Sciatic nerve (tissue), 2 donors: ENCODE measurements at regions of chr2 and their contacts with region 1.

Region 1: DNA sequence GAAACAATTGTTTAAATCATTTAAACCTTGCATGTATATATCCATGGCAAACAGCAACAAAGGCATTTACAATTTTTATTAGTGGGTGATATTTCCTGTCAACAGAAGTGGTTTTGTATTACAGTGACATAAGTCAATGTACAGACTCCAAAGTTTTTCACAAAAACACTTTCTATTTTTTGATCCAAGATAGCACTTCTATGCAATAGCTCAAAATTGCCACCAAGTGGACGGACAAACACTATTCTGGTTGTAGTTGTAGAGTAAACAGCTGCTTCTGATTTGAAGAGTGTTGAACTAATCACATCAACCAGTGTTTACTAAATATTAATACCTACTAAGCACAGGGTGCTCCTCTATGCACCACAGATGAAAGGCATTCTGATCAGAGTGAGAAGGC is 421.4 kb downstream of the NCKAP5 start:
- DNase-seq: no peak
- ATAC-seq: no peak

Region 2: GRCh38 chr2:132438691-132439090 is 708.2 kb before region 1 on chr2:
- intact Hi-C with region 1: no loop called
- DNase-seq: no peak
- ATAC-seq: no peak

Region 3: GRCh38 chr2:132669854-132670495 is 476.9 kb before region 1 on chr2 and contains the start of gene LYPD1:
- intact Hi-C with region 1: loop called (anchors 10 kb)
- DNase-seq: no peak
- ATAC-seq: peak; percentile 36
- total RNA-seq, gene LYPD1: 1.2 TPM

Region 4: GRCh38 chr2:133122529-133122928 is 24.4 kb before region 1 on chr2:
- intact Hi-C with region 1: no loop called
- DNase-seq: no peak
- ATAC-seq: no peak